HAP-1 (cell line): ENCODE measurements at regions of chr1 and their contacts with region 1.

Region 1: GRCh38 chr1:184222652-184223052 is 164.2 kb upstream of the C1orf21 start:
- DNase-seq: peak; percentile 25 to 70
- H3K4me3 ChIP-seq: no peak overlapping the region
- H3K4me1 ChIP-seq: no peaks in the 10 kb centered on the region
- H3K27me3 ChIP-seq: no peaks in the 10 kb centered on the region

Region 2: GRCh38 chr1:184082541-184083415 is 139.9 kb before region 1 on chr1:
- in situ Hi-C with region 1: loop called (anchors 10 kb)
- DNase-seq: no peak
- H3K4me3 ChIP-seq: no peak overlapping the region
- H3K4me1 ChIP-seq: peaks cover 15% of the 10 kb centered on the region
- H3K27me3 ChIP-seq: no peaks in the 10 kb centered on the region

Region 3: DNA sequence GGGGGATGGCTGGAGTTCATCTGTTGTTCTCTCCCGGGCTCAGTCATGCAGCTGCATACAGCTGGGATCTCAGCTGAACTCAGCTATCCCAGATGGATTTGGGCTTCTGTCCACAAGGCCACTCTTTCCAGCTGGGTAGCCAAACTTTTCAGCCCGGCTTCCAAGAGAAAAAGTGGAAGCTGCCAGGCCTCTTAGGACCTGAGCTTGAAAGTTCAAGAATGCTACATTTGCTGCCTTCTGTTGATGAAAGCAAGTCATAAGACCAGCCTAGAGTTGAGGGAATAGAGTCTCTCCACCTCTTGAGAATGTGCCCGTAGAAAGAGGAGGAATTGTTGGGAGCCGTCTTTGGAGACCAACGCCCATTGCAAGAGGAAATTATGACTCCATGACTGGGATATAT is 259.5 kb after region 1 on chr1:
- in situ Hi-C with region 1: no loop called
- DNase-seq: no peak
- H3K4me3 ChIP-seq: no peak overlapping the region
- H3K4me1 ChIP-seq: no peaks in the 10 kb centered on the region
- H3K27me3 ChIP-seq: no peaks in the 10 kb centered on the region